H1 (cell line): ENCODE measurements at regions of chr17 and their contacts with region 1.

Region 1: GRCh38 chr17:17749921-17750320 is 68.7 kb downstream of the RAI1 start:
- DNase-seq: peak; percentile 69 to 81
- H3K4me3 ChIP-seq: no peak overlapping the region
- H3K27ac ChIP-seq: no peak overlapping the region
- H3K4me1 ChIP-seq: peaks cover 5 to 34% (median 21%) of the 10 kb centered on the region in 4 experiments
- H3K27me3 ChIP-seq: no peaks in the 10 kb centered on the region
- CTCF ChIP-seq: no peak
- EP300 ChIP-seq: no peak
- POLR2A ChIP-seq: no peak
- RAD21 ChIP-seq: no peak

Region 2: GRCh38 chr17:17712268-17712924 is 37.5 kb before region 1 on chr17:
- CTCF ChIA-PET with region 1: interaction called, 19 read pairs
- POLR2A ChIA-PET with region 1: no interaction called
- DNase-seq: no peak
- H3K4me3 ChIP-seq: 0 out of 8 replicates have a peak overlapping the region, but pooled peaks of 1 of the 4 experiments have one; percentile 28
- H3K27ac ChIP-seq: no peak overlapping the region
- H3K4me1 ChIP-seq: peaks cover 13 to 37% (median 22%) of the 10 kb centered on the region in 4 experiments
- H3K27me3 ChIP-seq: peaks cover 6 to 66% (median 47%) of the 10 kb centered on the region in 4 experiments
- CTCF ChIP-seq: no peak
- EP300 ChIP-seq: no peak
- POLR2A ChIP-seq: no peak
- RAD21 ChIP-seq: no peak

Region 3: DNA sequence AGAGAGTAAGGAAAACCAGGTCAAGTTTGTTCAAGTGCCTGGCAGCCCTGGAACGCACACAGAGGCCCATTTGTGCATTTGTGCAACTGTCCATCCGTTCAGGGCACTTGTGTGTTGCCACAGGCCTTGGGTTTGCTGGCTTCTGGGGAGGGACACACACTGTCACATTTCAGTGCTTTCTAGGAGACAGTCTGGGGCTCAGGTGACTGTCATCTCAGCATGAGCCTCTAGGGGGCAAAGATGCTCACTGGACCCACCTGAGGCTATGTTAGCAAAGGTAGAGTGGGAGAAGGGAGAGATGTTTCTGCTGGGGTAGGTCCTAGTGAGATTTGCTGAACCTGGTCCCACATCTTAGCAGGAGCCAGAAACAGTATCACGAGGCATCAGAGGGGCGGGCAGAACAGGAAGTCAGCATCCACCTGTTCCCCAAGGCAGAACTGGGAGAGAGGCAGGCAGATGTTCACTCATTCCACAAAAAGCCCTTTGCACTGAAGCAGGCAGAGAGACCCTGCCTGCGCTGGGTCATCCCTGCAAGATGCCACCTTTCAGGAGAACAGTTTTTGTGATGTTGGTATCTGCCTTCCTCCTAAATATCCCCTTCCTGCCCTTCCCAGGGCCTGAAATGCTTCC is 20.2 kb before region 1 on chr17:
- CTCF ChIA-PET with region 1: interaction called, 47 read pairs
- POLR2A ChIA-PET with region 1: interaction called, 4 read pairs
- DNase-seq: peak in 1 of 2 experiments; percentile 83
- H3K4me3 ChIP-seq: no peak overlapping the region; a peak in 1 of 8 replicates
- H3K27ac ChIP-seq: no peak overlapping the region
- H3K4me1 ChIP-seq: peaks cover 0 to 14% (median 12%) of the 10 kb centered on the region in 4 experiments; a peak in 6 of 7 replicates
- H3K27me3 ChIP-seq: peaks cover 39 to 47% (median 46%) of the 10 kb centered on the region in 4 experiments
- CTCF ChIP-seq: peak; percentile 73 to 87 (median 77)
- EP300 ChIP-seq: no peak
- POLR2A ChIP-seq: no peak
- RAD21 ChIP-seq: peak; percentile 70 to 84

Region 4: GRCh38 chr17:17739388-17740066 is 10.4 kb before region 1 on chr17:
- CTCF ChIA-PET with region 1: interaction called, 35 read pairs
- POLR2A ChIA-PET with region 1: interaction called, 13 read pairs
- DNase-seq: no peak
- H3K4me3 ChIP-seq: no peak overlapping the region
- H3K27ac ChIP-seq: no peak overlapping the region
- H3K4me1 ChIP-seq: peaks cover 7 to 39% (median 29%) of the 10 kb centered on the region in 4 experiments
- H3K27me3 ChIP-seq: peaks cover 0 to 15% (median 6%) of the 10 kb centered on the region in 4 experiments; a peak in 5 of 7 replicates
- CTCF ChIP-seq: no peak
- EP300 ChIP-seq: no peak
- POLR2A ChIP-seq: no peak
- RAD21 ChIP-seq: no peak

Region 5: GRCh38 chr17:17763136-17763535 is 13.2 kb after region 1 on chr17:
- CTCF ChIA-PET with region 1: interaction called, 16 read pairs
- POLR2A ChIA-PET with region 1: interaction called, 4 read pairs
- DNase-seq: no peak
- H3K4me3 ChIP-seq: no peak overlapping the region
- H3K27ac ChIP-seq: no peak overlapping the region
- H3K4me1 ChIP-seq: peaks cover 0 to 9% (median 3%) of the 10 kb centered on the region in 4 experiments; a peak in 4 of 7 replicates
- H3K27me3 ChIP-seq: peaks cover 0 to 2% (median 0%) of the 10 kb centered on the region in 4 experiments; a peak in 2 of 7 replicates
- CTCF ChIP-seq: no peak
- EP300 ChIP-seq: no peak
- POLR2A ChIP-seq: no peak
- RAD21 ChIP-seq: no peak

Region 6: GRCh38 chr17:17774009-17774881 is 24.3 kb after region 1 on chr17:
- CTCF ChIA-PET with region 1: interaction called, 13 read pairs
- POLR2A ChIA-PET with region 1: no interaction called
- DNase-seq: no peak
- H3K4me3 ChIP-seq: no peak overlapping the region
- H3K27ac ChIP-seq: no peak overlapping the region
- H3K4me1 ChIP-seq: peaks cover under 1 to 8% (median 3%) of the 10 kb centered on the region in 4 experiments; a peak in 5 of 7 replicates
- H3K27me3 ChIP-seq: peaks cover 0 to 5% (median under 1%) of the 10 kb centered on the region in 4 experiments; a peak in 2 of 7 replicates
- CTCF ChIP-seq: peak; percentile 51 to 60 (median 51); a peak in 3 of 4 replicates
- EP300 ChIP-seq: no peak
- POLR2A ChIP-seq: no peak
- RAD21 ChIP-seq: peak; percentile 54 to 66